Activated CD8-positive, alpha-beta T cell treated with anti-CD3 and anti-CD28 coated beads for 36 hours (primary cell): ENCODE measurements at regions of chr12 and their contacts with region 1.

Region 1: DNA sequence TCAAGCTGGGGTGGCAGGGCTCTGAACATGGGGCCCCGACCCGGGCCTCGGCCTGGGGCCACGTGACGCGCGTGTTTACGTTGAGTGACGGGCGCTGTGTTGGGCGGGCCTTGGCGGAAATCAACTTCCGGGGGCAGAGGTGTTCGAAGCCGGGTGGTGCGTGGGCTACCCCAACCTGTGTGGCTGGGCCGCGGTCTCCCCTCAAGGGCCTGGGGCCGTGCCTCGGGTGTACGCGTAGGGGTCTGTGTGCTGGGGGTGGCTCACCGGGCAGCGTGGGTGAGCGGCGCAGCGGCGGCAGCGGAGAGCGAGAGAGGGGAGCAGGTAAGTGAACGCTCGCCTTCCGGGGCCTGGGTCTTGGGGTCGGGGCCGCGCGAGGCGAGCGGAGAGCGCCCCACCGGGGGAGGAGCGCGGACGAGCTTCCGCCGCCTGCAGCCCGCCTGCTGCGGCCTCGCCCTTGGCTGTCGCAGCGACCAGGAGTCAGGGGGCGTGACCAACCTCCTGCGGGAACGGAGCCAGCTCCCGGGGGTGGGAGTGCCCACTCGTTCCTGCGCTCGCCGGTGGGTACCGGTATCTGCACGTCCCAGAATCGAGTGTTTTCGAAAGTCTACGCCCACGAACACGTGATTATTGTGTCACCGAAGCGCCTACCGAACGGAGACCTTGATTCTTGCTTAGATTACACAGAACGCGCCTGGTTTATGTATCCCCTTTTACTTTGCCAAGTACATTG is at the start of gene CCDC91:
- DNase-seq: peak; percentile 93
- ATAC-seq: peak; percentile 82
- H3K4me3 Mint-ChIP-seq: peak within 1 kb of the TSS; percentile 79
- H3K27ac Mint-ChIP-seq: peak within 1 kb of the TSS; percentile 94
- H3K4me1 Mint-ChIP-seq: peaks cover 63% of the 10 kb centered on the region
- H3K27me3 Mint-ChIP-seq: no peaks in the 10 kb centered on the region
- CTCF ChIP-seq: peak; percentile 9
- total RNA-seq, gene CCDC91: 14.7 to 14.8 TPM

Region 2: DNA sequence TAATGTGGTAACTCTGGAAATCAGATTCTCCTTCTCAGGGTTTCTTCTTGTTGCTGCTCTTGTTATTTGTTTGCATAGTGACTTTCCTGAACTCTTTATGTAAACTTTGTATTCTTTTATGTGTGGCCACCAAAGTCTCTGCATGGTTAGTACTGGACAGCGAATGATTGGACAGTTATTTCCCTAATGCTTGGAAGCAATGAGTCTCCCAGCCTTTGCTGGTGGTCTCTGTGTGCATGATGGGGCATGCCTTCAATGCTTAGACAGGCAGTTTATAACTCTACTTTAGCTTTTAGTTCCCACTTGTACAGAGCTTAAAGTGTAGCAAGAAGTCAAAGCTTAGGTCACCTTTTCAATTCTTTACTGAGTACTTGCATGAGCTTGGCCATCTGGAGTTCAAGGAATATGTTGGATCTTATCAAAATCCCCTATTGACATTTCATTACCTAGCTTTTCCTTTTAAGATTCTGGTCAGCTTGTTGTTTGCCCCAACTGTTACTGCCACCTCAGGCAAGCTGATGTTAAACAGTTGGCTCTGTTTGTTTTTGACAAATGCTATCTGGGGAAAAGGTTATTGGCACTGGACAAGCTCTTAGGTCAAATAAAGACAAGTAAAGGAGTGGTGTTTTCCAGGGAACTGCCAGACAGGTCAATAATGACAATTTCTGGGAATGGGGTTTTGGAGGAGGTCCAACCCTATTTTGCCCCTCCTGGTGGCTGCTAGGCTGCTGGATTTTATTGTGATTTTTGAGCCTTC is 12.1 kb after region 1 on chr12:
- CTCF ChIA-PET with region 1: no interaction called
- POLR2A ChIA-PET with region 1: interaction called, 12 read pairs
- intact Hi-C with region 1: no loop called
- DNase-seq: no peak
- ATAC-seq: no peak
- H3K4me3 Mint-ChIP-seq: no peak overlapping the region
- H3K27ac Mint-ChIP-seq: no peak overlapping the region
- H3K4me1 Mint-ChIP-seq: peaks cover 18% of the 10 kb centered on the region
- H3K27me3 Mint-ChIP-seq: no peaks in the 10 kb centered on the region
- CTCF ChIP-seq: no peak

Region 3: DNA sequence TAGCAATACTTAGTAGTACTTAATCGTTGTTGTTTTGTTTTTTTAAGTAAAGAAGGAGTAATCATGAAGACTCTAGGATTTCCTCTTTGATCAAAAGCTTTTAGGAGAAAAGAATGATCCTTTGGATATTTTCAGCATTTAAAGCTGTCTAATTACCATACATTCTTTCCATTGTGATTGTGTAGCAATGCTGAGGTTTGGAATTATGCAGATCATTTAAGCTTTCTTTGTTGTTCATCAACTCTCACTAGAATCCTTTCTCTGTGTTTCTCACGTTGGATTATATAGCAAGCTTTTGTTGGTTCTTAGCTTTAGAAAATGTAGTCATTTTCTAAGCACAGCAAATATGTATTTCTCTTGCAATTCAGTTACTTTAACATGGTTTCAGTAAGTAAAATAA is 25.5 kb after region 1 on chr12:
- CTCF ChIA-PET with region 1: no interaction called
- POLR2A ChIA-PET with region 1: interaction called, 10 read pairs
- intact Hi-C with region 1: no loop called
- DNase-seq: no peak
- ATAC-seq: no peak
- H3K4me3 Mint-ChIP-seq: no peak overlapping the region
- H3K27ac Mint-ChIP-seq: no peak overlapping the region
- H3K4me1 Mint-ChIP-seq: peaks cover 22% of the 10 kb centered on the region
- H3K27me3 Mint-ChIP-seq: no peaks in the 10 kb centered on the region
- CTCF ChIP-seq: no peak

Region 4: DNA sequence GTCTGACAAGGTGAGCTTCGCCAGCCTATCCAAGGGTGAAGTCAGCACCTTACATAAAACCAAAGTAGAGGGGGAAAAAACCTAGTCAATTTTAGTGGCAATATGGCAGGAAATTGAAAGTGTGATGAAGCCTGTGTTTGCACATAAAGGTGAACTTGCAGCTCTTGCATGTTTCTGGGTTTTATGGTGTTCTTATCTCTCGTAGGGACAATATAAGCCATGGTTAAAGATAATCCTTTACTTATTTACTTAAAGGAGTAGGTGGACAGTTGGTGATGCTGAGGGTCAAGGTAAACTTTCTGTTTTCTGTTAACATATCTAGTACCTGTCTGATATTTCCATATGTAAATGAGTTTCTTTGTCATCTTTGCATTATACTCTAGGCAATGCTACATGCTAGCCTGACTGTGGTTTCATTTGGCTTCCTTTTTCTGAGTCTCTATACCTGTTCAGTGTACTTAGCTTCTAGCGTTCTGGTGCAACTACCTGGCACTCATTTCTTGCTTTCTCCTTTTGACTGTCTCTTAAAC is 32.6 kb after region 1 on chr12:
- CTCF ChIA-PET with region 1: no interaction called
- POLR2A ChIA-PET with region 1: interaction called, 13 read pairs
- intact Hi-C with region 1: no loop called
- DNase-seq: peak; percentile 32
- ATAC-seq: peak; percentile 90
- H3K4me3 Mint-ChIP-seq: peak overlapping the region; percentile 31
- H3K27ac Mint-ChIP-seq: peak overlapping the region; percentile 84
- H3K4me1 Mint-ChIP-seq: peaks cover 45% of the 10 kb centered on the region
- H3K27me3 Mint-ChIP-seq: peaks cover 2% of the 10 kb centered on the region
- CTCF ChIP-seq: no peak

Region 5: DNA sequence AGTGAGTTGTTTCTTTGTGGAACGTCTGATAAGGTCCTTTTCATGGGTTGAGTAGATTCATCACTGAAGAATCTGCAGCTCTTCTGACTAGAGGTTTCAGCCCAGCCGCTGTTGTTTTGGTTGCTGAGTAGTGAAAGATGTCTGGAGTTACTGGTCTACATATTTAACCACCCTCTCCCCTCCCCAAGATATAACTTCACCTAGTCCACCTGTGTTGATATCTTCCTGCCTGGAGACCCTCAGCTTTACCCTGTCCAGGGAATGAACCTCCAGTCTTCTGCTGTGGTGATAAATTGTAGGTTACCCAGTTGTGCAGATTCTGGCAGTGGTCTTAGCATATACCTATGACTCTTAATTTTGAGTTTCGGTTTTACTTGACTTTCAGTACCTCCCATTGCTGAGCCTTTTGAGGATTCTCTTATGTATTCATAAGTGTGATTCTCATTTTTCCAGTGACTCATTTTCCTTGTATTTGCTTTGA is 62.7 kb after region 1 on chr12:
- CTCF ChIA-PET with region 1: interaction called, 4 read pairs
- POLR2A ChIA-PET with region 1: interaction called, 10 read pairs
- intact Hi-C with region 1: loop called (anchors 5 kb)
- DNase-seq: peak; percentile 65
- ATAC-seq: peak; percentile 97
- H3K4me3 Mint-ChIP-seq: peak overlapping the region; percentile 64
- H3K27ac Mint-ChIP-seq: peak overlapping the region; percentile 88
- H3K4me1 Mint-ChIP-seq: peaks cover 68% of the 10 kb centered on the region
- H3K27me3 Mint-ChIP-seq: no peaks in the 10 kb centered on the region
- CTCF ChIP-seq: no peak